IMR-90 (cell line): ENCODE measurements at regions of chr2 and their contacts with region 1.

Region 1: DNA sequence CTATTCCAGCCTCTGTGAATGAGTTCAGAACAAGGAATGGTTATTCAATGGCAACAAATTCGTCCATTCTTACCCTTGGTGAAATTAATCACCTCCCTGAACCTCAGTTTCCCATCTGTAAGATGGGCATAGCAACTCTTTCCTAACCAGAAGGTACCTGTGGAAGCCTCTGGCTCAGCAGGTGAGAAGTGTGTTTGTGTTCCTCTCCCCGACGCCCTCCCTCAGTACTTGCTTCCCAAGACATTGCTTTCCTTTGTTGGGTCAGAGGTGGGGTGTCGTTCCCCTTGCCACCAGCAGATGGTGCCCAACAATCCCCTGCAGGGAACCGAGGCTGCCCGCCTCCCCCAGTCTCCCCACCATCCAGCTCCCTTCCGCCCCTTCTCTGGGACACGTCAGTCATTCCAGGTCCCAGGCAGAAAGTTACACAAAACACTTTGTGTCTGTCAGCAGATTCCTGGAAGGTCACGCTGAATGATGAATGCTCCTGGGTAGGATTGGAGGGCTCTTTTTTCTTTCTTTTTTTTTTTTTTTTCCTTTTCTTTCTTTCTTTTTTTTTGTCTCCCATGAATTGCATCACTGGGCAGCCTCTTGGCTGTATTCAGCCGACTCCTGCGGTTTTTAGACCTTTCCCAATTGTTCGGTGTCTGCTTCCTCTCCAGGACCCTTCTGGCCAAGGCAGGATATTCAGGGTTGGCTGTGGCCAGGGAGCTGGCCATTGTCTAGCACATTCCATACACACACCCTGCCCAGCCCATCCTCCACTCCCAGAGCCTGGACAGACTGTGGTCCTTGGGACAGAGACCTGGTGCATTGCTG is 117.3 kb downstream of the LPIN1 start:
- DNase-seq: peak; percentile 82
- ATAC-seq: peak; percentile 99
- H3K4me3 ChIP-seq: peak overlapping the region; percentile 10; the same call in 1 of the 2 replicates
- H3K27ac ChIP-seq: peak overlapping the region; percentile 66
- H3K4me1 ChIP-seq: peaks cover 2% of the 10 kb centered on the region; the same call in 1 of the 2 replicates
- H3K27me3 ChIP-seq: no peaks in the 10 kb centered on the region; the same call in 1 of the 2 replicates
- CTCF ChIP-seq: peak; percentile 85
- POLR2A ChIP-seq: no peak
- RAD21 ChIP-seq: peak; percentile 93

Region 2: GRCh38 chr2:12050396-12050795 is 186.7 kb after region 1 on chr2:
- CTCF ChIA-PET with region 1: no interaction called
- POLR2A ChIA-PET with region 1: no interaction called
- dilution Hi-C with region 1: no loop called
- in situ Hi-C with region 1: no loop called
- intact Hi-C with region 1: loop called (anchors 2 kb)
- DNase-seq: peak; percentile 94
- ATAC-seq: peak; percentile 80
- H3K4me3 ChIP-seq: no peak overlapping the region
- H3K27ac ChIP-seq: peak overlapping the region; percentile 64; the same call in 1 of the 2 replicates
- H3K4me1 ChIP-seq: peaks cover 5% of the 10 kb centered on the region
- H3K27me3 ChIP-seq: no peaks in the 10 kb centered on the region
- CTCF ChIP-seq: peak; percentile 46
- POLR2A ChIP-seq: no peak
- RAD21 ChIP-seq: peak; percentile 66

Region 3: DNA sequence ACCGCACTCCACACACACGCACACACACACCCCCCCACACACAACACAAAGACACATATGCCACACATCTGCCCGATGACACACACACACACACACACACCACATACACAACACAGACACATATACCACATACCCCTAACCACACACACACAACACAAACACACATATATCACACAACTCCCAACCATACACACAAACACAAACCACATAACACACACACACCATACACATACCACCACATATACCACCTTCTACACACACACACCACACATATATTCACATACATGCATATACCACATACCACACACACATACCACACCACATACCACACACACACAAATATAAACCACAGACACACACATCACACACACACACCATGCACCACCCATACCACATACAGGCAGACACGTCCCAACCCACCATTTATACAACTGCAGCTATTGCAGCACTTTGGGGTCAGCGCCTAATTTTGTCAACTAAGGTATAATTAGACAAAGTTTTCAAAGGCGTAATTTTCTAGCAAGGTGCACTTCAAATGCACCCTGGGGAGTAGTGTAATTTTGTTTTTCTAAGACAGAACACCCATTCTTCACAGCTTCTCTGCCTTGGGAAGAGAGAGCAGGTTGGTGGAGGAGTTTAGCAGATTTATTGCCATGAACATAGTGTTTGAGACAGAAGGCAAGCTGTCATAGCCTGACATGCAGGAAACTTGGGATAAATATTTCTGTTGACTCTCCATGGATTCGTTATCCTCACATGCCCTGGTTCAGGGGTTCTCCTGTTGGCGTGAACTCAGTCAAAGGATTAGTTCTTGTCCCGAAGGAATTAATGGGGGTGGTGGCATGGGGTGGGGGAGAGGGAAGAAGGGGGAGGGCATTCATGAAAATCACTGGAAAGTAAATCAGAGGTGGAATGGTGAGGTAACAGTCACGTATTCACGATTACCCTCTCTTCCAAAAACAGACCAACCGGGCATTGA is 298.8 kb after region 1 on chr2:
- CTCF ChIA-PET with region 1: no interaction called
- POLR2A ChIA-PET with region 1: no interaction called
- dilution Hi-C with region 1: no loop called
- in situ Hi-C with region 1: no loop called
- intact Hi-C with region 1: no loop called
- DNase-seq: no peak
- ATAC-seq: no peak
- H3K4me3 ChIP-seq: no peak overlapping the region
- H3K27ac ChIP-seq: no peak overlapping the region
- H3K4me1 ChIP-seq: no peaks in the 10 kb centered on the region
- H3K27me3 ChIP-seq: no peaks in the 10 kb centered on the region
- CTCF ChIP-seq: no peak
- POLR2A ChIP-seq: no peak
- RAD21 ChIP-seq: no peak

Region 4: DNA sequence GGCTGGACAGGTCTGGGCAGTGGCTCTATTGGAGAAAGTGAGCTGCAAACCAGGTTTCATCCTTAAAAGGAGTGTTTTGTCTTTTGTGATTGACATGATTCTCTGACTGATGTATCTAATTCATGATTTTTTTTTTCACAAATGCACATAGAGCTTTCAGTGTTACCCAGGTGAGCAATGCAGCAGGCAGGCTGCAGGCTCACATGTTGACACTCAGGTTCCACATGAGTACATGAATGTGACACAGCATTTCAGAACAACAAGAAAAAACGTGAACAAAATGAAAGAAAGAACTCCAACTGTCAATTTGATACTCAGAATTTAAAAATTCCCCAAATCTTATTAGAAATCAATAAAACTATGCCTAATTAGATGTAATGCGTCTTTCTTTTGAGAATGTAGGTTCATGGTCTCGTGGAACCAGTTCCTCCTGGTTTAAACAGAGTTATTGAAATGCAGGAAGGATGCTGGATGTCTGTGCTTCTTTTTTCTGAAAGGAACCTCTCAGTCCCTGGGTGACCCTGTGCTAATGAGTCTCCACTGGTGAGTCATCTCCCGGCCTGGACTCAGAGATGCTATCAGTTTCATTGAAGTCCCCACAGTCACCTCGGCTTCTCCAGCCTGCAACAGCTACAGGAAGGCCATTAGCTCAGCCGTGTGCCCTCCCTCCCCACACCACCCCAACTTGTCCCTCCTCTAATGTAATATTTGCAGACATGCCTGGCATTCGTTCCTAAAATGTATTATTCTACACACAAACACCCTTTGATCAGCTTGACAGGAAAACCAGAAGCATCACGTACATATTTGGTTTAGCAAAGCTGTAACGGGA is 313.1 kb after region 1 on chr2:
- CTCF ChIA-PET with region 1: no interaction called
- POLR2A ChIA-PET with region 1: no interaction called
- dilution Hi-C with region 1: no loop called
- in situ Hi-C with region 1: no loop called
- intact Hi-C with region 1: loop called (anchors 1 kb)
- DNase-seq: peak; percentile 76
- ATAC-seq: peak; percentile 87
- H3K4me3 ChIP-seq: no peak overlapping the region
- H3K27ac ChIP-seq: no peak overlapping the region; the same call in 1 of the 2 replicates
- H3K4me1 ChIP-seq: peaks cover 11% of the 10 kb centered on the region
- H3K27me3 ChIP-seq: no peaks in the 10 kb centered on the region
- CTCF ChIP-seq: no peak
- POLR2A ChIP-seq: no peak
- RAD21 ChIP-seq: no peak

Region 5: GRCh38 chr2:12416600-12416999 is 552.9 kb after region 1 on chr2:
- CTCF ChIA-PET with region 1: no interaction called
- POLR2A ChIA-PET with region 1: no interaction called
- dilution Hi-C with region 1: no loop called
- in situ Hi-C with region 1: no loop called
- intact Hi-C with region 1: loop called (anchors 5 kb)
- DNase-seq: peak; percentile 48
- ATAC-seq: peak; percentile 63
- H3K4me3 ChIP-seq: no peak overlapping the region
- H3K27ac ChIP-seq: peak overlapping the region; percentile 20; the same call in 1 of the 2 replicates
- H3K4me1 ChIP-seq: peaks cover 8% of the 10 kb centered on the region
- H3K27me3 ChIP-seq: no peaks in the 10 kb centered on the region
- CTCF ChIP-seq: peak; percentile 53
- POLR2A ChIP-seq: no peak
- RAD21 ChIP-seq: peak; percentile 62

Region 6: GRCh38 chr2:12970861-12971260 is 1107.1 kb after region 1 on chr2:
- CTCF ChIA-PET with region 1: no interaction called
- POLR2A ChIA-PET with region 1: no interaction called
- dilution Hi-C with region 1: no loop called
- in situ Hi-C with region 1: no loop called
- intact Hi-C with region 1: no loop called
- DNase-seq: peak; percentile 58
- ATAC-seq: peak; percentile 42; the same call in 1 of the 2 replicates
- H3K4me3 ChIP-seq: no peak overlapping the region
- H3K27ac ChIP-seq: no peak overlapping the region
- H3K4me1 ChIP-seq: no peaks in the 10 kb centered on the region; the same call in 1 of the 2 replicates
- H3K27me3 ChIP-seq: peaks cover 2% of the 10 kb centered on the region; the same call in 1 of the 2 replicates
- CTCF ChIP-seq: no peak
- POLR2A ChIP-seq: no peak
- RAD21 ChIP-seq: no peak